Endothelial cell of umbilical vein (primary cell): ENCODE measurements at regions of chr18 and their contacts with region 1.

Region 1: DNA sequence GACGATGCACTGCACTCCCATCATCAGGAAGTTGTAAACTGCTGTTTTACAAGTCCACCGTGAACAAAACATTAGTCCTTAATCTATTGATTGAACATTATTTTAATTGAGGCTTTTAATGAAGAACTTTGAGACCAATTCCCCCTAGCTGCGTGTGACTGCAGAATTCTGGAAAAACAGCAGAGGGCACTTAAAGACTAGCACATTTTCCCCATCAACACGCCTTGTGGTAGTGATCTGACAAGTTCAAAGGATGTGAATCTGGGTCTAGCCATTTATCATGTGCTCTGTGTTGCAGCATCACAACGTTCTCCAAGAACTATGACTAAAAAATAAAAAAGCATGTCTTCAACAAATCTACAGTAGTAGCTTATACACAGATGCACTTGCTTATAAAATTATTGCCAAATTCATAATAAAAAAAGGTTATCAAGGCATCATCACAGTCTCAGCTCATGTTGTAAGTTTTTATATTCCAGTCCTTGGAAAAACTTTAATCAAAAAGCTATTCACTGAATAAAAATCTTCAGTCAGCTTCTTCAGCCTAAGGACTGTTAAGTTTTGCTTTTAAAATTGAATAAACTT is 35.8 kb downstream of the SKOR2 start:
- DNase-seq: peak; percentile 47
- H3K4me3 ChIP-seq: no peak overlapping the region
- H3K27ac ChIP-seq: no peak overlapping the region
- H3K4me1 ChIP-seq: no peaks in the 10 kb centered on the region
- H3K27me3 ChIP-seq: peaks cover 11 to 13% of the 10 kb centered on the region in 2 experiments
- CTCF ChIP-seq: peak; percentile 23 to 32
- POLR2A ChIP-seq: no peak

Region 2: GRCh38 chr18:47283476-47283875 is 67.8 kb after region 1 on chr18:
- CTCF ChIA-PET with region 1: no interaction called
- POLR2A ChIA-PET with region 1: no interaction called
- dilution Hi-C with region 1: no loop called
- intact Hi-C with region 1: loop called (anchors 1 kb)
- DNase-seq: peak; percentile 27
- H3K4me3 ChIP-seq: no peak overlapping the region
- H3K27ac ChIP-seq: no peak overlapping the region
- H3K4me1 ChIP-seq: no peaks in the 10 kb centered on the region
- H3K27me3 ChIP-seq: no peaks in the 10 kb centered on the region
- CTCF ChIP-seq: peak; percentile 30 to 38
- POLR2A ChIP-seq: no peak

Region 3: GRCh38 chr18:47756364-47757016 is 540.8 kb after region 1 on chr18:
- CTCF ChIA-PET with region 1: interaction called, 34 read pairs
- POLR2A ChIA-PET with region 1: no interaction called
- dilution Hi-C with region 1: no loop called
- intact Hi-C with region 1: loop called (anchors 1 kb)
- DNase-seq: peak; percentile 62
- H3K4me3 ChIP-seq: no peak overlapping the region
- H3K27ac ChIP-seq: no peak overlapping the region
- H3K4me1 ChIP-seq: no peaks in the 10 kb centered on the region
- H3K27me3 ChIP-seq: no peaks in the 10 kb centered on the region
- CTCF ChIP-seq: peak; percentile 92 to 95
- POLR2A ChIP-seq: no peak

Region 4: DNA sequence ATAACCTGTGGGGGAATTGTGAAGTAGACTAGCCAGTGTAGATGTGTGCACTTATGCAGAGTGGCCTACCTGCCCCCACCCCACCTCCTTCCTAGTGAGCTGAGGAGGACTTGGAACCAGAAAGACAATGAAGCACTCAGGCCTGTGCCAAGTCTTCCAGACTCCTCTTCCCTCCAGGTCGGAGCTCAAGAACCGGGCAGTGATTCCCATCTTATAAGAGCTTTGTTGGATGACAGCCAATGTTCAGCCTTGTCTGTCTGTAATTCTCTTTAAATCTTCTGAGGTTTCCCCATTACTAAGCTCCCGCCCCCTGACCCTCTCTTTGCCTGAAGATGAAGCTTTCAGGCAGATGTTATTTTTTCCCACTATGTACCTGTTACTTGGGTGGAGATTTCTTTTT is 593.8 kb after region 1 on chr18:
- CTCF ChIA-PET with region 1: no interaction called
- POLR2A ChIA-PET with region 1: no interaction called
- dilution Hi-C with region 1: no loop called
- intact Hi-C with region 1: no loop called
- DNase-seq: no peak
- H3K4me3 ChIP-seq: no peak overlapping the region
- H3K27ac ChIP-seq: no peak overlapping the region
- H3K4me1 ChIP-seq: no peaks in the 10 kb centered on the region
- H3K27me3 ChIP-seq: no peaks in the 10 kb centered on the region
- CTCF ChIP-seq: no peak
- POLR2A ChIP-seq: no peak